GM10248 (cell line): ENCODE measurements at regions of chr20 and their contacts with region 1.

Region 1: DNA sequence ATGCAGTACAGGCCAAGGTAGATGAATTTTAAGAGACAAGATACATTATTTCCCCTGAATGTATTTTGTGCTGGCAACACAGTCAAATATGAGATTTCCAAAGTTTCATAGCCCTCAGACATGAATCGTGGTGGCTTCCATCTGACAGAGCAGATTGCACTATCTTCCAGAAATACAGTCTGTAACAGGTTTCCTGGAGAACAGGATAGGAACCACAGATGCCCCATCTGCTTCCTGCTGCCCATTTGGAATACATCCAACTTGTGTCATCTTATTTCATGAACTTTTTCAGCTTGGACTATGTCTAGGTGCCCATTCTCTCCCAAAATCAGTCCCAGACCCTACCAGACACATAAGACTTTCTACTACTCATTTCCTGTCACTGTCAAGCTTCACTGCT is 426.0 kb downstream of the KIF16B start:
- DNase-seq: no peak
- CTCF ChIP-seq: no peak

Region 2: GRCh38 chr20:16135630-16136029 is 11.6 kb before region 1 on chr20:
- CTCF ChIA-PET with region 1: interaction called, 12 read pairs
- POLR2A ChIA-PET with region 1: no interaction called
- DNase-seq: no peak
- CTCF ChIP-seq: no peak

Region 3: DNA sequence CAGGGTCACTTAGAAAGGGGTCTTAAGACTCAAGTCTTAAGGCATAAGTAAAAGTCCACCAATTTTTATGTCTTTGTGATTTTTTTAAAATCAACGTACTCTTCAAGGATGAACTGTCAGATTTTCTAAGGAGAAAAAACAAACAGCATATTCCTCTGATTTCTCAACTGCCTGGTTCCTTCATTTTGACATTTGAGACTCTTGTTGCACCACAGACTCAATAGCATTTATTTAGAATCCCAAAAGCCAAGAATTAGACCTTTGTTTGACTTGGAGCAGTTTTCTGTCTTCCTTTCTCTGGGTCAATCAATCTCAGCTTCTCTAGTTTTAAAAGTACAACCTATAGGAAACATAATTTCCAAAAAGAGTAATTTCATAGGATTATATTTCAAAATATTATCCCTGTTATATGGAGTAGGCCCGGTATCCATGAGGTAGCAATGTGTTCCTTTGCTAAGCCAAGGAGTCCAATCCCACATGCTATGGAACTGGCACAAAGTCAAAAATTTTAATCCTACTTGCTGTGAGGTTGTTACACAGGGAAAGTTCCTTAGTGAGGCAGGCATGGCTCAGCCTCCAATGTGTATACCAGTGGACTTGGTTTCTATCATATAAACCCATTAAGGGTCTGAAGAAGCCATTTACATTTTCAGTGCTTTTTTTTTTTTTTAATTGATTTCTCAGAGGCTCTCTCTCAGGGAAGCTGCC is 20.4 kb after region 1 on chr20:
- CTCF ChIA-PET with region 1: no interaction called
- POLR2A ChIA-PET with region 1: no interaction called
- DNase-seq: no peak
- CTCF ChIP-seq: no peak

Region 4: DNA sequence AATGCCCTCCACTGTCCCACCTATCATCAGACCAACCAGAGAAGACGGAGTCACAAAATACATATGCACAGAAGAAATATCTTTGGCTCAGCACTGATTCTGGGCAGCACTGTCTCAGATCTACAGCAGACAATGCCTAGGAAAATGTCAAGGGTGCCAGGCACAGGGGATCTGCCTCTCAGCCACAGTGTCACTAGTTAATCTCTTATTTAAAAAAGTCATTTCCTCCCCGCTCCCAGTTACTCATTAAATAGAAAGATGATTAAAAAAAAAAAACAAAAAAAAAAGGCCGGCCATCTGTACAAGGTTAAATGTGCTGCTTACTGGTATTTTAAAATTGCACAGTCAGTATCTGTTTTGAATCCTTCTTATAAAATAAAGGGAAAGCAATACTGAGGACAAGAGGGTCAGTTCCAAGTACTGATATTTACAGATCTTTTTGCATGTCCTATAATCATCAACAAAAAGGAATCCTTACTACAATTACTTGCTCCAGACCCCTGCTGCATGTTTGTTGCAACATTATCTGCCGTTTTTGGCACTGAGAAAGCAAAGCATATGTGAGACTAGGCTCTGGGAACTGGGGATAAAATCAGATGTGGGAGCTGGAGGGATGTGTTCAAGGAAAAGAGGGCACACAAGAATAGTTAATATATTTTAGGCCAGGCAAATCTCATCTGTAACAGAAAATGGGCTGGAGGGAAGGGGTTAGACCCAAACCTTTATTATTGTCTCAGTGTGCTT is 126.8 kb after region 1 on chr20:
- CTCF ChIA-PET with region 1: no interaction called
- POLR2A ChIA-PET with region 1: no interaction called
- DNase-seq: no peak
- CTCF ChIP-seq: no peak